Activated CD4-positive, alpha-beta T cell treated with anti-CD3 and anti-CD28 coated beads, Interleukin-2, amount 10 ng/mL, durations not matched to agents 24 days and 14 days (primary cell): ENCODE measurements at regions of chr3 and their contacts with region 1.

Region 1: GRCh38 chr3:181700168-181701087 is 11.3 kb upstream of the SOX2 start:
- DNase-seq: peak; percentile 88
- H3K4me3 Mint-ChIP-seq: peak overlapping the region; percentile 79
- H3K27ac Mint-ChIP-seq: peak overlapping the region; percentile 58
- H3K4me1 Mint-ChIP-seq: peaks cover 20% of the 10 kb centered on the region
- H3K27me3 Mint-ChIP-seq: peaks cover 88% of the 10 kb centered on the region

Region 2: DNA sequence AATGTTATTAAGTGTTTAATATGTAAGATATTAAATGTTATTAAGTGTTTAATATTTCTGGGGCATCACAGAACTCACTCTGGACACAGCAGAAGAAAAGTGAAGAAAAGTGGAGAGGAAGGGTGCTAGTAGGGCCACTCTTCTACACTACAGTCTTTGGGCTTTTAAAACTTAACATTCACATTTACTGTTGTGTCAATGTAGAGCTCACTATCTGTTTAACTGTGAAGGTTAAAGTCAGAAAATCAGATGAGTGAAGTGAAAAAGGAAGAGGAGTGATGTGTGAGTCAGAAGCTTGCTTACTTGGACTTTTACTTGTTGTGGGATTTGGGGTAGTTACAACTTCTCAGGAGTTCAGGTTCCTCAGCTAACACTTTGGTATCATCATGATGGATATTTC is 565.6 kb before region 1 on chr3:
- intact Hi-C with region 1: no loop called
- DNase-seq: no peak
- H3K4me3 Mint-ChIP-seq: no peak overlapping the region
- H3K27ac Mint-ChIP-seq: no peak overlapping the region
- H3K4me1 Mint-ChIP-seq: no peaks in the 10 kb centered on the region
- H3K27me3 Mint-ChIP-seq: no peaks in the 10 kb centered on the region

Region 3: GRCh38 chr3:181210275-181210674 is 490.2 kb before region 1 on chr3:
- intact Hi-C with region 1: loop called (anchors 5 kb)
- DNase-seq: no peak
- H3K4me3 Mint-ChIP-seq: no peak overlapping the region
- H3K27ac Mint-ChIP-seq: no peak overlapping the region
- H3K4me1 Mint-ChIP-seq: no peaks in the 10 kb centered on the region
- H3K27me3 Mint-ChIP-seq: peaks cover 2% of the 10 kb centered on the region